OCI-LY7 (cell line): ENCODE measurements at regions of chr2 and their contacts with region 1.

Region 1: GRCh38 chr2:229868794-229869193 is 53.0 kb downstream of the TRIP12 start:
- DNase-seq: no peak
- H3K4me3 ChIP-seq: no peak overlapping the region
- H3K27ac ChIP-seq: no peak overlapping the region
- H3K4me1 ChIP-seq: peaks cover 13% of the 10 kb centered on the region
- CTCF ChIP-seq: no peak

Region 2: DNA sequence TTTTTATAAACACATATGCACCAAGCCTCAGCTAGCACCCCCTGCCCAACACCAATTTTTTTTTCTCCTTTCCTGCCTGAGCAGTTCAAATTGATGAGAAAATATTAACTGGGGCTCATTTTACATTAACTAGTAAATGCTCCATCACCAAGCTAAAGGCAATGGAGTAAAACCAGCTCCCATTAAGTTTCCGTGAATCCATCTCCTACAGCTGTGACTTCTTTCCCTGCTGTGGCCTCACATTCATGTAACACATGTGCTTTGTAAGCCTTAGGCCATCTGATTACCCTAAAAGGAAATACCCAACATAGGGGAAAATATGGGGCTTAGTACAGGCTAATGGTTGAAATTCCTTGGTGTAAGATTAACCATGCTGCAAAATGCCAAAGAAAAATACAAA is 215.3 kb before region 1 on chr2:
- CTCF ChIA-PET with region 1: no interaction called
- POLR2A ChIA-PET with region 1: no interaction called
- intact Hi-C with region 1: no loop called
- DNase-seq: no peak
- H3K4me3 ChIP-seq: no peak overlapping the region
- H3K27ac ChIP-seq: no peak overlapping the region
- H3K4me1 ChIP-seq: no peaks in the 10 kb centered on the region
- CTCF ChIP-seq: no peak

Region 3: DNA sequence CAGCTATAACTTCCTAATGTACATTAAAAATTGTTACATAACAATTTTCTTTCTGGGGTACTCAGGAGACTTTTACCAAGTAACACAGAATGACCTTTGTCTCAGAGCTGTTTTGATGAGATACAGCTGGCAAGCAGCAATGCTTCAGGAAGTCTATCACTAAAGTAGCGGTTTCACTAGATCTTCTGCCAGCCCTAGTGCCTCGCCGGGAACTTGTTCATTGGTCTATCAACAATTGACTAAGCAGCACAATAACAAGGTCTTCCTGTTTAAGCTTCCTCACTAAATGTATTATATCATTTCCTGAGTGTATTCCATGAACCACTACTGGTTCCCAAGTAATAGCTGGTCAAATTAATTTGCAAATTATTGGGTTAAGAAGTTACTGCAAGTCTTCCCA is 16.2 kb before region 1 on chr2:
- CTCF ChIA-PET with region 1: no interaction called
- POLR2A ChIA-PET with region 1: interaction called, 16 read pairs
- intact Hi-C with region 1: no loop called
- DNase-seq: no peak
- H3K4me3 ChIP-seq: no peak overlapping the region
- H3K27ac ChIP-seq: no peak overlapping the region
- H3K4me1 ChIP-seq: no peaks in the 10 kb centered on the region
- CTCF ChIP-seq: no peak

Region 4: GRCh38 chr2:229921892-229922445 is 53.2 kb after region 1 on chr2 and contains the start of gene TRIP12:
- CTCF ChIA-PET with region 1: no interaction called
- POLR2A ChIA-PET with region 1: interaction called, 10 read pairs
- intact Hi-C with region 1: no loop called
- DNase-seq: peak; percentile 95
- H3K4me3 ChIP-seq: peak within 1 kb of the TSS; percentile 95
- H3K27ac ChIP-seq: peak within 1 kb of the TSS; percentile 85
- H3K4me1 ChIP-seq: peaks cover 19% of the 10 kb centered on the region
- CTCF ChIP-seq: no peak
- total RNA-seq, gene TRIP12: 80.0 and 94.0 TPM in 2 replicates

Region 5: GRCh38 chr2:230326453-230327417 is 457.9 kb after region 1 on chr2 and contains the start of gene SP140L:
- CTCF ChIA-PET with region 1: no interaction called
- POLR2A ChIA-PET with region 1: no interaction called
- intact Hi-C with region 1: no loop called
- DNase-seq: peak; percentile 84
- H3K4me3 ChIP-seq: peak within 1 kb of the TSS; percentile 69
- H3K27ac ChIP-seq: peak within 1 kb of the TSS; percentile 75
- H3K4me1 ChIP-seq: peaks cover 29% of the 10 kb centered on the region
- CTCF ChIP-seq: no peak
- total RNA-seq, gene SP140L: 7.5 and 10.4 TPM in 2 replicates